ENCODE measurements at regions of chr1 and their contacts with region 1.

Region 1: DNA sequence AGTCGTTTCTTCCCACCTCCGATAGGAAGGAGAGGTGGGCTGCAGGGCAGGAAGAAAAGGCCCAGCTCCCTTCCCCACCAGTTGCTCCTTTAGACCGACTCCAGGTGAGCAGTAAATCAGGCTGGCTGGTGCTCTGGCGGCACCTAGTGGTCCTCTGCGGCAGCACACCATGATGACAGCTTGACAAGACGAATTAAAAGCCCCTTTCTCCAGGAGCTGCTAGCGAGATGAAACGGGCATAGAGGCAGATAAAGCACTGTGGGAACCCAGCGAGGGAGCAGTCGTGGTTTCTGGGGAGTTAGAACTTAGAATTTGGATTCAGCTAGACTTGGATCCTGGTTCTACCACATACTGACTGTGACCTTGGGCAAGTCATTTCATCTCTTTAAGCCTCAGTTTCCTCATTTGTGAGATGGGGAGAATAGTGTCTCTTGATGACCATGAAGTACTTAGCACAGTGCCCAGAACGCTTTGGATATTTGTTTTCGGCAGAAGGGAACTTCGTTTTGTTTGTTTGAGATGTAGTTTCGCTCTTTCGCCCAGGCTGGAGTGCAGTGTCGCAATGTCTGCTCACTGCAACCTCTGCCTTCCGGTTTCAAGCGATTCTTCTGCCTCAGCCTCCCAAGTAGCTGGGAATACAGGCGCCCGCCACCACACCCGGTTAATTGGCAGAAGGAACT is 21.8 kb upstream of the COL9A2 start:
- DNase-seq: peak; percentile 96
- ATAC-seq: peak; percentile 98
- H3K4me3 Mint-ChIP-seq: no peak overlapping the region
- H3K27ac Mint-ChIP-seq: no peak overlapping the region
- H3K4me1 Mint-ChIP-seq: 0 out of 2 replicates have a peak, but pooled peaks cover 3% of the 10 kb centered on the region
- H3K27me3 Mint-ChIP-seq: peaks cover 37% of the 10 kb centered on the region
- CTCF ChIP-seq: peak; percentile 96

Region 2: DNA sequence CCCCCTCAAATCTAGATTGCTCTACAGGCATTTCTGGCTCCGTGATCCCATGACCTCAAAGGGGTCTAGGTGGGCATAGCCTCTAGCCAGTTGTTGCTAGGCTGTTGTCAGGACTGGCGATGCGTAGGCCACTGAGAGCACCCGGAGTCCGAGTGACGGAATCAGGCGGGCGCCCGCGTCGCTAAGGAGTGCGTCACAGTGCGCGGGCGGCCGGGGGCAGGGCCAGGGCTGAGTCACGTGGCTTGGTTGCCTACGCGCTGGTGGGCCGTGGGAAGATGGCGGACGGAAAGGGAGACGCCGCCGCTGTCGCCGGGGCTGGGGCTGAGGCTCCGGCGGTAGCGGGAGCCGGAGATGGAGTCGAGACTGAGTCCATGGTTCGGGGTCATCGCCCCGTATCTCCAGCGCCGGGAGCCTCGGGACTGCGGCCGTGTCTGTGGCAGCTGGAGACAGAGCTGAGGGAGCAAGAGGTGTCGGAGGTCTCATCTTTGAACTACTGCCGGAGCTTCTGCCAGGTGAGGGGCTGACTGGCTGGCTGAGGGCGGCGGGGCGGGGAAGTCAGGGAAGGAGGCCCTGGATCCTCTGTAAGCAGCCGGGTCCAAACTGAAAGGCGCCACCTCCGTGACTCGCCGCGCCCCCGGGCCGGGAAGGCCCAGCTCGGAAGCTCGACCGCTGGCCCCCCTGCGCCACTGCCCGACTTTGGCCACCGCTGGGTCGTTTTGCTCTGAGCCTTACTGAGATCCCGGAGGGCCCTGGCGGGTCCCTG is 177.6 kb before region 1 on chr1 and contains the start of gene RLF:
- CTCF ChIA-PET with region 1: interaction called, 13 read pairs
- POLR2A ChIA-PET with region 1: interaction called, 6 read pairs
- DNase-seq: peak; percentile 94
- ATAC-seq: peak; percentile 97
- H3K4me3 Mint-ChIP-seq: no peak within 1 kb of the TSS
- H3K27ac Mint-ChIP-seq: peak within 1 kb of the TSS; percentile 100
- H3K4me1 Mint-ChIP-seq: peaks cover 14% of the 10 kb centered on the region
- H3K27me3 Mint-ChIP-seq: no peaks in the 10 kb centered on the region
- CTCF ChIP-seq: no peak
- total RNA-seq, gene RLF: 18.5 to 22.1 TPM (median 20.2 TPM) in 3 replicates

Region 3: DNA sequence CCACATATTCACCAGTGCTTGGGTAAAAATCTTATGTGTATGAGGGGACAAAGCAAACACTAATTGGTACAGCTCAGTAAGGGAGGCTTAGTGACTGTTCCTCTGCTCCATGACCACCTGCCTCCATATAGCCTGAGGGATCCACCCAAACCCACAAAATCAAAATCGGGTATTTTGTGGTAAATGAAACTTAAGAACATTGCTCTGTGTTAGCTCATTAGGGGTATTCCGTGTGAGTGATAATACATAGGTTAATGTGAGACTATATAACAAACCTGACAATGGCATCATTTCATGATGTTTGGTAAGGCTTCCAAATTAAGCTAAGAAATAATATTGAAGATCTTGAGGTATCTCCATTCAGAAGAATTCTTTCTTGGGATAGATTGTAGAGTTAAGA is 47.6 kb before region 1 on chr1:
- CTCF ChIA-PET with region 1: interaction called, 14 read pairs
- POLR2A ChIA-PET with region 1: no interaction called
- DNase-seq: no peak
- ATAC-seq: no peak
- H3K4me3 Mint-ChIP-seq: no peak overlapping the region
- H3K27ac Mint-ChIP-seq: no peak overlapping the region
- H3K4me1 Mint-ChIP-seq: peaks cover 12% of the 10 kb centered on the region
- H3K27me3 Mint-ChIP-seq: no peaks in the 10 kb centered on the region
- CTCF ChIP-seq: no peak

Region 4: DNA sequence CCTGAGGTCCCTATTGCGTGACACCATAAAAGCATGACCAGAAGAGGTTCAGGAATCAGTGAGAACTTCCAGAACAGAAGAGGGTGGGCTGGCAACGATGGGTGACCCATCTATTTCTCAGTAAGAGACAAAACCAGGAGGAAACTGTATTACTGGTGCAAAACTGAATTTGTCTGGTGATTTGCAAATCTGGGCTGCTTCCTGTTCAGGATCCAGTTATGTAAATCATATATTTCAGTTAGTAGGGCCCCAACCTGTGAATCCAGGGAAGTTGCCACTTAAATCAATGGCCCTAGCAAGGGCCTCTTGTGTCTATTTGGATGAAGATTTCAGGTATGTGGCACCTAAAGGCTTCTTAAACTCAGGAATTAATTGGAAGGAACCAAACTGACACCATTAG is 11.5 kb after region 1 on chr1:
- CTCF ChIA-PET with region 1: interaction called, 29 read pairs
- POLR2A ChIA-PET with region 1: interaction called, 4 read pairs
- DNase-seq: no peak
- ATAC-seq: no peak
- H3K4me3 Mint-ChIP-seq: no peak overlapping the region
- H3K27ac Mint-ChIP-seq: no peak overlapping the region
- H3K4me1 Mint-ChIP-seq: no peaks in the 10 kb centered on the region
- H3K27me3 Mint-ChIP-seq: no peaks in the 10 kb centered on the region
- CTCF ChIP-seq: no peak

Region 5: DNA sequence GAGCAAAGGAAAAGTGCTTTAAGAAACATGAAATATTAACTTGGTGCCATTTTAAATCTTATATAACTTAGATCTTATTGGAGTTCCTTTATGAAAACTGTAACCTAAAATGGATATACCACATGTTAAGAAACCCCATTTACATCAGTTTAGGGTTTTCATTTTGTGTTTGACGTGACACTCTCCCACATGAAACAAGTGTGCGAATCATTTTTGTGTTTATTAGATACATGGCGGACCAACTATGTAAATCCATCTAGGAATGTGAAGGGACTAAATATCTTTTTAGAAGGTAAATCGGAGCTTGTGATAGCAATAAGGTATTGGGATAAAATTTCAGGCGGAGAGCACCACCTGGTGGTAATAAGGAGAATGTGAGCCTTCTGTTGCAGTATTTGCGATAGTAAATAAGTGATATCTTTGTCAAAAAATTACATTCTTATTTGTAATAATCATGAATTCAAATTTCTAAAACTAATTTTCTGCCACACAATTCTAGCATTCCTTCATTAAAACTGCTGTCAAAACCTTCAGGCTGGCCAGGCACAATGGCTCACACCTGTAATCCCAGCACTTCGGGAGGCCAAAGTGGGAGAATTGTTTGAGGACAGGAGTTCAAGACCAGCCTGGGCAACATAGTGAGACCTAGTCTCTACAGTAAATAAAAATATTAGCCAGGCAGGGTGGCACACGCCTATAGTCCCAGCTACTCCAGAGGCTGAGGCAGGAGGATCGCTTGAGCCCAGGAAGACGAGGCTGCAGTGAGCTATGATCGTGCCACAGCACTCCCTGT is 66.0 kb after region 1 on chr1:
- CTCF ChIA-PET with region 1: interaction called, 42 read pairs
- POLR2A ChIA-PET with region 1: no interaction called
- DNase-seq: no peak
- ATAC-seq: no peak
- H3K4me3 Mint-ChIP-seq: no peak overlapping the region
- H3K27ac Mint-ChIP-seq: no peak overlapping the region
- H3K4me1 Mint-ChIP-seq: peaks cover 12% of the 10 kb centered on the region
- H3K27me3 Mint-ChIP-seq: no peaks in the 10 kb centered on the region
- CTCF ChIP-seq: peak; percentile 72

Region 6: GRCh38 chr1:40531381-40532061 is 192.6 kb after region 1 on chr1 and contains the start of gene ZNF684:
- CTCF ChIA-PET with region 1: interaction called, 11 read pairs
- POLR2A ChIA-PET with region 1: no interaction called
- DNase-seq: peak; percentile 80
- ATAC-seq: peak; percentile 99
- H3K4me3 Mint-ChIP-seq: peak within 1 kb of the TSS; percentile 97
- H3K27ac Mint-ChIP-seq: peak within 1 kb of the TSS; percentile 94
- H3K4me1 Mint-ChIP-seq: peaks cover 12% of the 10 kb centered on the region
- H3K27me3 Mint-ChIP-seq: peaks cover 10% of the 10 kb centered on the region
- CTCF ChIP-seq: no peak
- total RNA-seq, gene ZNF684: 5.0 to 9.8 TPM (median 7.7 TPM) in 3 replicates

Region 7: GRCh38 chr1:40563266-40563665 is 224.4 kb after region 1 on chr1:
- CTCF ChIA-PET with region 1: no interaction called
- POLR2A ChIA-PET with region 1: no interaction called
- DNase-seq: no peak
- ATAC-seq: no peak
- H3K4me3 Mint-ChIP-seq: no peak overlapping the region
- H3K27ac Mint-ChIP-seq: no peak overlapping the region
- H3K4me1 Mint-ChIP-seq: no peaks in the 10 kb centered on the region
- H3K27me3 Mint-ChIP-seq: peaks cover 4% of the 10 kb centered on the region; the same call in 1 of the 2 replicates
- CTCF ChIP-seq: no peak

Measured in WTC11 (cell line).